Psoas muscle (tissue), 8 donors: ENCODE measurements at regions of chr18 and their contacts with region 1.

Region 1: GRCh38 chr18:64073971-64074370 is 74.9 kb downstream of the LINC00305 start:
- DNase-seq: no peak
- ATAC-seq: no peak
- H3K4me3 ChIP-seq: no peak overlapping the region
- H3K27ac ChIP-seq: no peak overlapping the region
- H3K4me1 ChIP-seq: no peaks in the 10 kb centered on the region
- H3K27me3 ChIP-seq: no peaks in the 10 kb centered on the region
- CTCF ChIP-seq: no peak

Region 2: GRCh38 chr18:62957885-62958472 is 1116.0 kb before region 1 on chr18:
- intact Hi-C with region 1: loop called in 1 of 2 experiments (anchors 10 kb)
- DNase-seq: no peak
- ATAC-seq: no peak
- H3K4me3 ChIP-seq: no peak overlapping the region
- H3K27ac ChIP-seq: no peak overlapping the region
- H3K4me1 ChIP-seq: no peaks in the 10 kb centered on the region
- H3K27me3 ChIP-seq: no peaks in the 10 kb centered on the region
- CTCF ChIP-seq: peak; percentile 39

Region 3: DNA sequence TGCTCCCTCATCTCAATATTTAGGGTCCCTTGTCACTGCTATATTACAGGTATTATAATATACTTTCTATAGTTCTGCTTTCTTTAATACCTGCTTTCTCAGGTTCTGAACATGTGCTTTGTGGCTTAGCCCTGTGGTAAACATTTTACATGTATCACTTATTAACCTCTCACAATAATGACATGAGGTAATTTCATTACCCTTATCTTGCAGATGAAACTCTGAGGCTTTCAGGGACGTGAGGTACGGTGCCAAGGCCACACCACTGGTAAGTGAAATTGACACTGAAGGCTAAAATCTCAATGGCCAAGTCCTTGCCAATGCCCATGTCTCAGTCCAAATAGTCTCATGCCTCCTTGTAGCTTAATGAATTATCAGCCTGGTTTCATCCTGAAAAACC is 53.2 kb after region 1 on chr18:
- intact Hi-C with region 1: no loop called
- DNase-seq: no peak
- ATAC-seq: no peak
- H3K4me3 ChIP-seq: no peak overlapping the region
- H3K27ac ChIP-seq: no peak overlapping the region
- H3K4me1 ChIP-seq: no peaks in the 10 kb centered on the region
- H3K27me3 ChIP-seq: no peaks in the 10 kb centered on the region
- CTCF ChIP-seq: no peak